IMR-90 (cell line): ENCODE measurements at regions of chr1 and their contacts with region 1.

Region 1: GRCh38 chr1:14945132-14946016 is 208.2 kb upstream of the TMEM51 start:
- DNase-seq: peak; percentile 90
- ATAC-seq: peak; percentile 82
- H3K4me3 ChIP-seq: peak overlapping the region; percentile 47
- H3K27ac ChIP-seq: peak overlapping the region; percentile 100
- H3K4me1 ChIP-seq: peaks cover 42% of the 10 kb centered on the region
- H3K27me3 ChIP-seq: no peaks in the 10 kb centered on the region
- CTCF ChIP-seq: no peak
- POLR2A ChIP-seq: 0 out of 2 replicates have a peak, but pooled peaks have one; percentile 35
- RAD21 ChIP-seq: no peak

Region 2: DNA sequence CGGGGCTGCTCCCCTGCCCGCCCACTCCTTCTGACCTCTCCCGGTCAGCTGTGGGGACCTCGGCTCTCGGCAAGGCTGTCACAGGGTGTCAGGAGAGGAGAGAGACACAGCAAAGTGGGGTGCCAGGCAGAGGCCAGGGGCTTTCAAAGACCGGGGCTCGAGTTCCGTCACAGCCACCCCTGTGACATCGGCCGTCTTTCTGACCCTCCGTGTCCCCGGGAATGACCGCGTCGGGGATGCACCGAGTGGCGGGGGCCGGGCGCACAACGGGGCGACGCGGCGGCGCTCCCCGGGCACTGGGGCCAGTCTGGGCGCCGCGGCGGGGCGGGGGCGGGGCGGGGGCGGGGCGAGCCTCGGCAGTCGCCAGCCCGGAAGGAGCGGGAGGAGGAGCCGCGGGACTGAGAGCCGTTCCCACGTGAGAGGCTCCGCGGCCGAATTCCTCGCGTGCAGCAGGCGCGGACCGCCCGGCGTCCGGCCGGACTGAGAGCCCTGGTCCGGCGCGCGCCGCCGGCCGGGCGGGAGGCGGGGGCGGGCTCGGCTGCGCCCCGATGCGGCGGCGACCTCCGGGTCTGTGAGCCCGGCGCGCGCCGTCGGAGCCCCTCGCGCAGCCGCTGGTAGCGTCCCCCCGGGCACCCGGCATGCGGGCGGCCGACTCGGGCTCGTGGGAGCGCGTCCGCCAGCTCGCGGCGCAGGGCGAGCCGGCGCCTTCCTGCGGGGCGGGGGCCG is 21.5 kb before region 1 on chr1:
- CTCF ChIA-PET with region 1: no interaction called
- POLR2A ChIA-PET with region 1: no interaction called
- dilution Hi-C with region 1: no loop called
- in situ Hi-C with region 1: no loop called
- intact Hi-C with region 1: loop called (anchors 2 kb)
- DNase-seq: peak; percentile 71
- ATAC-seq: peak; percentile 73
- H3K4me3 ChIP-seq: peak overlapping the region; percentile 79
- H3K27ac ChIP-seq: peak overlapping the region; percentile 40; the same call in 1 of the 2 replicates
- H3K4me1 ChIP-seq: peaks cover 20% of the 10 kb centered on the region
- H3K27me3 ChIP-seq: no peaks in the 10 kb centered on the region; the same call in 1 of the 2 replicates
- CTCF ChIP-seq: no peak
- POLR2A ChIP-seq: no peak
- RAD21 ChIP-seq: no peak

Region 3: DNA sequence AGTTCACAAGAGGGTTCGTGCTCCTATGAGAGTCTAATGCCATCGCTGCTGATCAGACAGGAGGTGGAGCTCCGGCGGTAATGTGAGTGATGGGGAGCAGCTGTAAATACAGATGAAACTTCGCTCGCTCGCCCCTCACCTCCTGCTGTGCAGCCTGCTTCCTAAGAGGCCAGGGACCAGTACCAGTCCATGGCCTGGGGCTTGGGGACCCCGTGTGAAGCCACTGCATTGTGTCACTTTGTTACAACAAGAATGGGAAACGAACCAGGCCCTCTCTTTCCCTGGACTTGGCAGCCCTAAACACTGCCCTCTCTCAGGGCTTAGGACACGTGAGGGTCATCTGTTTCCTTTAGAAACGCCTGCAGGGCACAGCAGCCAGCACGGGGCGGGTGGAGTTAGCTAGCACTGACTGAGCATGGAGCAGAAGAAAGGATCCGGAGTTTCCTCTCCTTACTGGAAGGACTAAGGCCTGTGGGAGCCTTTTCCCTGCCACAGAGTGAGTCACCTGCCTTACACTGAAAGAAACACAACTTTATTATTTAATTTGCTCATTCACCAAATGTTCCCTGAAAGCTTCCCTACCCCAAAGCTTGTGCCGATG is 23.0 kb after region 1 on chr1:
- CTCF ChIA-PET with region 1: interaction called, 4 read pairs
- POLR2A ChIA-PET with region 1: no interaction called
- dilution Hi-C with region 1: no loop called
- in situ Hi-C with region 1: no loop called
- intact Hi-C with region 1: loop called (anchors 2 kb)
- DNase-seq: peak; percentile 91
- ATAC-seq: peak; percentile 92
- H3K4me3 ChIP-seq: no peak overlapping the region
- H3K27ac ChIP-seq: peak overlapping the region; percentile 86
- H3K4me1 ChIP-seq: peaks cover 24% of the 10 kb centered on the region
- H3K27me3 ChIP-seq: no peaks in the 10 kb centered on the region
- CTCF ChIP-seq: no peak
- POLR2A ChIP-seq: no peak
- RAD21 ChIP-seq: peak; percentile 17

Region 4: DNA sequence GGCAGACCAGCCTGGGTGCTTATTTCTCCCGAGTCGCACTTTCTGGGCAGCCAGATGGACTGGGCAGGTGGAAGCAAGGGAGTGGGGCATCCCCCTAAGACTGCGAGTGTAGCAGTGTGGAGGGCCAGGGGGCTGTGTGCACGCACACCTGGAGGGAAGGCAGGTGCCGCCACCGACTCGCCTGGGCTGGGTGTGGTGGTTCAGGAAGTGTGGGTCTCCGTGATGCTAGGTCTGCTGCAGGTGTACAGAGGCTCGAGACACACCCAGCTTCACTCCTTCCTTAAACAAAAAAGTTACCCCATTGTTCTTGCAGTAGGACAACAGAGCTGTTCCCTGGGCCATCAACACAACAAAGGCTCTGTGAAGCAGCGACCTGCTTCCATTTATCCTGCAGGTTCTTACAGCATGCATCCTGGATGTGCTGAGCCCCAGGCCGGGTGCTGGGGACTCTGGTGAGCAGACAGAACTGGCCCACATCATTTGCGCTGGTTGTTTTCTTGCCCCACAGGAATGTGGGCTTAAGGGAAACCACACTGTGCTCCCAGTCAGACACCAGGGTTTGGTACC is 107.8 kb after region 1 on chr1:
- CTCF ChIA-PET with region 1: no interaction called
- POLR2A ChIA-PET with region 1: no interaction called
- dilution Hi-C with region 1: no loop called
- in situ Hi-C with region 1: no loop called
- intact Hi-C with region 1: no loop called
- DNase-seq: no peak
- ATAC-seq: no peak
- H3K4me3 ChIP-seq: no peak overlapping the region
- H3K27ac ChIP-seq: no peak overlapping the region
- H3K4me1 ChIP-seq: no peaks in the 10 kb centered on the region
- H3K27me3 ChIP-seq: no peaks in the 10 kb centered on the region
- CTCF ChIP-seq: no peak
- POLR2A ChIP-seq: no peak
- RAD21 ChIP-seq: no peak

Region 5: DNA sequence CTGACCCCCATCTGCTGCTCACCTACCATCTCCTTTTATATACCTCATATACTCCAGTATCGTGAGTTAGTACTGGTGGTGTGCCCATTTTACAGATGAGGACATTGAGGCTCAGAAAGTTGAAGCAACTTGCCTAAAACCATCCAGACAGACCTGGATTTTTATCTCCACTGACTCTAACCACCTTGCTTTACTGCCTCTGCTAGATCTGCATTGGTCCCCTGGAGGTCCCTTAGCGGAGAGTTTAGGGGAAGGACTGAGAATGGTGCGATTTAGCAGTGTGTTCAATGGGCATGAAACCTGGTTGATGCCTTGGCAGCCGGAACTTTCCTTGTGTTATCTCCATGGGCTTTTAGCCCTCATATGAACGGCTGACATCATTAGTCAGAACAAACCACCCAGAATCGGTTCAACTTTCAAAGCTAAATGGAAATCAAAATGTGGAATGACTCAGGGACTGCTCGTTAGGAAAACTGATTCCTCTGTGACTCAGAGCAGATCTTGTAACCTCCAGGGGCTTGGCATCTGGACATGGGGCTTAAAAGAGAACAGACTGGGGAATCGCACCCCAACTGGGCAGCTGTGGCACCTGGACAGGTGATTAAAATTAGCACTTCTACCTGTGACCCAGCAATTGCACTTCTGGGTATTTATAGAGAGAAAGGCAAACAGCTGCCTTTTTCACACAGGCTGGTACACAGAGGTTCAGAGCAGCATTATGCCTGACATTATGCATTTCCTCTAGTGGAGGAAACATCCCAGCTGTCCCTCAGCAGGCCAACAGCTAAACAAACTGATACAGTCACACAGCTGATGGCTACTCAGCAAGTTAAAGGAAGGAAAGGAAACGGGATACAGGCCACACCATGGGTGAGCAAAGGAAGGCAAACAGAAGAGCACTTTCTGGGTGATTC is 233.5 kb after region 1 on chr1:
- CTCF ChIA-PET with region 1: no interaction called
- POLR2A ChIA-PET with region 1: no interaction called
- dilution Hi-C with region 1: no loop called
- in situ Hi-C with region 1: no loop called
- intact Hi-C with region 1: loop called (anchors 10 kb)
- DNase-seq: peak; percentile 97
- ATAC-seq: peak; percentile 88
- H3K4me3 ChIP-seq: no peak overlapping the region
- H3K27ac ChIP-seq: peak overlapping the region; percentile 81
- H3K4me1 ChIP-seq: peaks cover 43% of the 10 kb centered on the region
- H3K27me3 ChIP-seq: no peaks in the 10 kb centered on the region
- CTCF ChIP-seq: no peak
- POLR2A ChIP-seq: peak; percentile 45; the same call in 1 of the 2 replicates
- RAD21 ChIP-seq: peak; percentile 23